ENCODE measurements at regions of chr19 and their contacts with region 1.

Region 1: DNA sequence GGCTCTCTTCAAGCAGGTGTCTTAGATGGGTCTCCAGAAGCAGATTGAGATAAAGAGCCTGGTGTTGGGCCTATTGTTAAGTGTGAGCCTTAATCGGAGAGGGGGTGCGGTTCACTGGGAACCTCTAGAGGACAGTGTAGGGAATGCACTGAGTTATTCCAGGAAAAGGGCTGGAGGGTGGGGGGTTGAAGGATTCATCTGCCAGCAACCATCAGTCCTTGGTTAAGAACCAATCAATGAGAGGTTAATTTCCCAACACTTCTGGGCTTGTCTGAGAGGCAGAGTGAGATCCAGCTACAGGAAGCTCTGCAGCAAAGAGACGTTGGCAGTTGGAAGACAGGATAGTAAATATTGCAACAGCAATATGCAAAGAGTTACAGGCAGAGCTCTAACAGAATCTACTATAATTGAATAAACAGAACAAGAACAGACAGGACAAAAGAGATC is 28.7 kb downstream of the CYP4F2 start:
- DNase-seq: no peak
- ATAC-seq: peak; percentile 59
- H3K4me3 ChIP-seq: no peak overlapping the region
- H3K27ac ChIP-seq: no peak overlapping the region
- H3K4me1 ChIP-seq: no peaks in the 10 kb centered on the region
- H3K27me3 ChIP-seq: no peaks in the 10 kb centered on the region

Region 2: GRCh38 chr19:15584541-15585115 is 284.5 kb before region 1 on chr19:
- intact Hi-C with region 1: loop called in 1 of 2 experiments (anchors 2 kb)
- DNase-seq: peak; percentile 84 to 94
- ATAC-seq: peak; percentile 79
- H3K4me3 ChIP-seq: no peak overlapping the region
- H3K27ac ChIP-seq: no peak overlapping the region
- H3K4me1 ChIP-seq: no peaks in the 10 kb centered on the region
- H3K27me3 ChIP-seq: no peaks in the 10 kb centered on the region

Measured in aorta (tissue), 5 donors.